ENCODE measurements at regions of chr1 and their contacts with region 1.

Region 1: DNA sequence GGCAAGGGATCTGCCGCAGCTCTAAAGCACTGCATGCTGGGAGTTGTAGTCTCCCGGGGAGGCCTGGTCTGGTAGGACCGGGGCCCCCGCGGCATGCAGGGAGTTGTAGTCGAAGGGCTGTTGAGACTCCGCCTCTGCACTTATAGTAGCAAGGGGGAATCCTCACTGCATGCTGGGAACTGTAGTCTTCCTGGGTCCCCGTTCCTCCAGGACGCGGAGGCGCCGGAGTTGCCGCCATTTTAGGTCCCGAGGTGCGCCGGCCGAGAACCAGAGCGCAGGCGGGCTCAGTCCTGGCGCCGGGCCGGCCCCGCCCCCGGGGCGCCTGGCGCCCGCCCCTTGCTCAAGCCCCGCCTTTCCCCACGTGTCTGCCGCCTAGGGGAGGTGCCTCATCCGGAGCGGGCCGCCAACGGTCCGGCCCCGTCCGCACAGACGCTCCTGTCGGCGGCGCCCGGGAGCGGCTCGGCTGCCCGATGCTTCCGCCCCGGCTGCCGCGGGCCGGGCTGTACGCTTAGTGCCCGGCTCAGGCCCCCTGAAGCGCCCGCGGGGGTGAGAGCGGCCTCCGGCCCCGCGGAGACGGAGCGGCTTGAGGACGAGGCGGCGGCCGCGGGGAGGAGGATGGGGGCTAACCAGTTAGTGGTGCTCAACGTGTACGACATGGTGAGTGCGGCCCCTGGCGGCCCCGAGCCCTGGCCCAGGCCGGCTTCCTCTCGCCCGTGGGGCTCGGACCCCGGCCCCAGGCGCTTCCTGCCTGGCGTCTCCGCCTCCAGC is at the start of gene DESI2:
- DNase-seq: peak; percentile 100
- H3K4me3 Mint-ChIP-seq: no peak within 1 kb of the TSS
- H3K27ac Mint-ChIP-seq: peak within 1 kb of the TSS; percentile 63
- H3K4me1 Mint-ChIP-seq: peaks cover 17% of the 10 kb centered on the region
- H3K27me3 Mint-ChIP-seq: no peaks in the 10 kb centered on the region
- CTCF ChIP-seq: peak; percentile 86
- total RNA-seq, gene DESI2: 99.0 and 101 TPM in 2 replicates

Region 2: GRCh38 chr1:244665771-244666217 is 12.9 kb after region 1 on chr1:
- CTCF ChIA-PET with region 1: interaction called, 8 read pairs
- POLR2A ChIA-PET with region 1: interaction called, 10 read pairs
- intact Hi-C with region 1: no loop called
- DNase-seq: no peak
- H3K4me3 Mint-ChIP-seq: no peak overlapping the region
- H3K27ac Mint-ChIP-seq: no peak overlapping the region
- H3K4me1 Mint-ChIP-seq: peaks cover 6% of the 10 kb centered on the region
- H3K27me3 Mint-ChIP-seq: no peaks in the 10 kb centered on the region
- CTCF ChIP-seq: no peak

Region 3: GRCh38 chr1:244675167-244675566 is 22.3 kb after region 1 on chr1:
- CTCF ChIA-PET with region 1: interaction called, 5 read pairs
- POLR2A ChIA-PET with region 1: interaction called, 18 read pairs
- intact Hi-C with region 1: no loop called
- DNase-seq: no peak
- H3K4me3 Mint-ChIP-seq: no peak overlapping the region
- H3K27ac Mint-ChIP-seq: peak overlapping the region; percentile 41
- H3K4me1 Mint-ChIP-seq: peaks cover 24% of the 10 kb centered on the region
- H3K27me3 Mint-ChIP-seq: no peaks in the 10 kb centered on the region
- CTCF ChIP-seq: no peak

Region 4: GRCh38 chr1:244735404-244735803 is 82.5 kb after region 1 on chr1:
- CTCF ChIA-PET with region 1: interaction called, 4 read pairs
- POLR2A ChIA-PET with region 1: interaction called, 29 read pairs
- intact Hi-C with region 1: loop called (anchors 2 kb)
- DNase-seq: peak; percentile 66
- H3K4me3 Mint-ChIP-seq: no peak overlapping the region
- H3K27ac Mint-ChIP-seq: peak overlapping the region; percentile 92
- H3K4me1 Mint-ChIP-seq: peaks cover 23% of the 10 kb centered on the region
- H3K27me3 Mint-ChIP-seq: no peaks in the 10 kb centered on the region
- CTCF ChIP-seq: no peak

Region 5: GRCh38 chr1:244778361-244778760 is 125.5 kb after region 1 on chr1:
- CTCF ChIA-PET with region 1: interaction called, 5 read pairs
- POLR2A ChIA-PET with region 1: interaction called, 3 read pairs
- intact Hi-C with region 1: loop called (anchors 5 kb)
- DNase-seq: peak; percentile 92
- H3K4me3 Mint-ChIP-seq: no peak overlapping the region
- H3K27ac Mint-ChIP-seq: no peak overlapping the region
- H3K4me1 Mint-ChIP-seq: peaks cover 9% of the 10 kb centered on the region
- H3K27me3 Mint-ChIP-seq: no peaks in the 10 kb centered on the region
- CTCF ChIP-seq: no peak

Region 6: GRCh38 chr1:244835276-244836134 is 182.6 kb after region 1 on chr1 and contains the start of gene COX20:
- CTCF ChIA-PET with region 1: no interaction called
- POLR2A ChIA-PET with region 1: interaction called, 82 read pairs
- intact Hi-C with region 1: loop called (anchors 2 kb)
- DNase-seq: peak; percentile 98
- H3K4me3 Mint-ChIP-seq: peak within 1 kb of the TSS; percentile 81
- H3K27ac Mint-ChIP-seq: peak within 1 kb of the TSS; percentile 99
- H3K4me1 Mint-ChIP-seq: peaks cover 33% of the 10 kb centered on the region
- H3K27me3 Mint-ChIP-seq: no peaks in the 10 kb centered on the region
- CTCF ChIP-seq: no peak
- total RNA-seq, gene COX20: 44.6 and 46.1 TPM in 2 replicates